ENCODE measurements at regions of chr3 and their contacts with region 1.

Region 1: DNA sequence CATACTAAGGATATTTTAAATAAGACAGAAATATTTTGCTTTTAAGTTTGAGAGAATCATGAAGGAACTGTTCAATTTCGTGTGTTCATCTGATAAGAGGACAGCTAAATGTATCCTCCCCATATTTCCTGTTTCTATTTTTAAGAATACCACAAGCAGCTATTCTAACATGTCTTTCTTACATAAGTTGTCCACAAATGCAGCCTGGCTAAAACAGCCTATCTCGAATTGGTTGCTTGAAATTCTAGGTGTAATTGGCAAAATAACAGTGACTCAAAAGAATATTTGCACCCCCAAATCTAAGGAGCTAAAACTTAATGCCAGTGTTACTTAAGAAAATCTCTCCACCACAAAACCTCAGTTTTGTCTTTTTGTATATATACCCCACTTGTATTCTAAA is 35.0 kb downstream of the BTLA start:
- DNase-seq: no peak
- ATAC-seq: no peak
- H3K4me3 Mint-ChIP-seq: no peak overlapping the region
- H3K27ac Mint-ChIP-seq: peak overlapping the region; percentile 52
- H3K4me1 Mint-ChIP-seq: peaks cover 82% of the 10 kb centered on the region
- H3K27me3 Mint-ChIP-seq: no peaks in the 10 kb centered on the region

Region 2: DNA sequence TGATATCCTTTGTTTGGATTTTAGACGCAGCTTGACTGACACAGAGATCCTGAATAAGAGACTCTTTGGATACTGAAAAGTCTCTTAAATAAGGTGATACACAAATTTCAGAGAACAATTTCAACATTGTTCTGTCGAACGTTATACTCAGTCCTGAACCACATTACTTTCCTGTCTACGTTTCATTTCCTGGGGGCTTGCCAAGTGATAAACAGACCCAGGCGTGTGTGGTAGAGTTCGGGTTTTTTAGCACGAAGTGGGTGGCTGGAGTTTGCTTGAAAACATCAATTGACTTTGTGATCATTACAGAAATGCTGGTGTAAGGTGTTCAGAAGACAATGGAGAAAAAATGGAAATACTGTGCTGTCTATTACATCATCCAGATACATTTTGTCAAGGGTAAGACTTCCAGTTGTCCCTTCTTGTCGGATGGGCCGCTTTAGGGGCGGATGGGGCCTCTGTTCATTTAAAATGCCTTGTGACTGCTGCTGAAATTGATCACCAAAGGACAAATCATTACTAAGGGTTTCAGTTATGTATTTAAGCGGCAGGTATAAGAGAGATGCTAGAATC is 922.3 kb before region 1 on chr3 and contains the start of gene CD96:
- CTCF ChIA-PET with region 1: no interaction called
- POLR2A ChIA-PET with region 1: no interaction called
- intact Hi-C with region 1: no loop called
- DNase-seq: peak; percentile 81
- ATAC-seq: peak; percentile 71
- H3K4me3 Mint-ChIP-seq: no peak within 1 kb of the TSS
- H3K27ac Mint-ChIP-seq: peak within 1 kb of the TSS; percentile 100
- H3K4me1 Mint-ChIP-seq: peaks cover 82% of the 10 kb centered on the region
- H3K27me3 Mint-ChIP-seq: no peaks in the 10 kb centered on the region
- total RNA-seq, gene CD96: 38.3 to 40.8 TPM

Region 3: GRCh38 chr3:112477891-112478290 is 13.6 kb after region 1 on chr3:
- CTCF ChIA-PET with region 1: interaction called, 12 read pairs
- POLR2A ChIA-PET with region 1: no interaction called
- intact Hi-C with region 1: no loop called
- DNase-seq: no peak
- ATAC-seq: no peak
- H3K4me3 Mint-ChIP-seq: no peak overlapping the region
- H3K27ac Mint-ChIP-seq: no peak overlapping the region
- H3K4me1 Mint-ChIP-seq: peaks cover 61% of the 10 kb centered on the region
- H3K27me3 Mint-ChIP-seq: no peaks in the 10 kb centered on the region

Region 4: GRCh38 chr3:112489674-112490479 is 25.6 kb after region 1 on chr3:
- CTCF ChIA-PET with region 1: interaction called, 3 read pairs
- POLR2A ChIA-PET with region 1: no interaction called
- intact Hi-C with region 1: loop called (anchors 2 kb)
- DNase-seq: no peak
- ATAC-seq: peak; percentile 21
- H3K4me3 Mint-ChIP-seq: peak overlapping the region; percentile 52
- H3K27ac Mint-ChIP-seq: peak overlapping the region; percentile 92
- H3K4me1 Mint-ChIP-seq: peaks cover 74% of the 10 kb centered on the region
- H3K27me3 Mint-ChIP-seq: no peaks in the 10 kb centered on the region

Measured in activated CD4-positive, alpha-beta T cell treated with anti-CD3 and anti-CD28 coated beads for 36 hours (primary cell).